GM10248 (cell line): ENCODE measurements at regions of chr9 and their contacts with region 1.

Region 1: GRCh38 chr9:22528485-22528884 is 81.9 kb downstream of the DMRTA1 start:
- DNase-seq: no peak
- CTCF ChIP-seq: no peak

Region 2: GRCh38 chr9:22374051-22374450 is 154.4 kb before region 1 on chr9:
- CTCF ChIA-PET with region 1: no interaction called
- POLR2A ChIA-PET with region 1: no interaction called
- DNase-seq: no peak
- CTCF ChIP-seq: no peak

Region 3: GRCh38 chr9:22433691-22434090 is 94.8 kb before region 1 on chr9:
- CTCF ChIA-PET with region 1: no interaction called
- POLR2A ChIA-PET with region 1: no interaction called
- DNase-seq: no peak
- CTCF ChIP-seq: no peak

Region 4: GRCh38 chr9:22514866-22515265 is 13.6 kb before region 1 on chr9:
- CTCF ChIA-PET with region 1: interaction called, 16 read pairs
- POLR2A ChIA-PET with region 1: no interaction called
- DNase-seq: no peak
- CTCF ChIP-seq: no peak